Ovary (tissue), 10 donors: ENCODE measurements at regions of chr12 and their contacts with region 1.

Region 1: DNA sequence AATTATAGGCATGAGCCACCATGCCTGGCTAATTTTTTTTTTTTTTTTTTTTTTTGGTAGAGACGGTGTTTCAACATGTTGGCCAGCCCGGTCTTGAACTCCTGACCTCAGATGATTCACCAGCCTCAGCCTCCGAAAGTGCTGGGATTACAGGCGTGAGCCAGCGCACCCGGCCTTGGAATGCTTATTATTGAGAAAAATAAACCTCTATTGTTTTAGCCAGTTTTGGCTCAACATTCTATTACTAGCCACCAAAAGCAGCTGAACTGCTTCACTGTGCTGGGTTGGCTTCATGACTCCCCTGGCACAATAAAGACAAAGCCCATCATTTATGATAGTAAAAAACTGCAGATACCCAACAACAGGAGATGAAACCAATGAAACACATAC is 93.5 kb upstream of the CEP83 start:
- DNase-seq: peak; percentile 44 to 73 (median 64)
- H3K4me3 ChIP-seq: no peak overlapping the region
- H3K27ac ChIP-seq: no peak overlapping the region
- H3K4me1 ChIP-seq: peaks cover 2% of the 10 kb centered on the region
- H3K27me3 ChIP-seq: no peaks in the 10 kb centered on the region
- CTCF ChIP-seq: no peak
- EP300 ChIP-seq: no peak
- POLR2A ChIP-seq: no peak

Region 2: DNA sequence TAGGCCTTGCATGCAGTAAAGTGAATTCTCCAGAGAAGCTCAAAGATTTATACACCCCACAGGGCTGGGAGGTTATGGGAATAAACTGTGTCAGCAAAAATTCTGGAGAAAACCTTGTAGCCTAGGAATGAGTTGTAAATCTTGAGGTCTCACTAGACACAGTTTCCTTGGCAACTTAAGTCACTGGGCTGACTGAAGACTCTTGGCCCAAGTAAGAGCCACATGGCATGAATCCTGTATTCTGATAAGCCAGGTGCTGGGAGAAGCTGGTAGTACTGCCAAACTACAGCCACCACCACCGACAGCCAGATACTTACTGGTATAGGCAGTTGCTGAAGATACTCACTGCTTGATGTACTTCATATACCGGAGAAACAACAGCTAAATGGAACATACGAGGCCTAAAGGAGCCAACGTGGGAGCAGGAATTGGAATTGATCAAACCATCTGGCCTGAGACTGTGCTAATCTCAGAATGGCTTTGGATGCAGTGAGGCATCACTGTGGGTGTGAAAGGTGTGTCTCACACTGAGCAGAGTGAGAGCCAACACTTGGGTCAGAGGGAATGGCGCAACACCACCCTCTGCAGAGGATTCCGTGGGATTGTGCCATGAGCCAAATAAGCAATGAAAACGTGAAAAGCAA is 200.0 kb after region 1 on chr12:
- intact Hi-C with region 1: loop called in 2 of 4 experiments (anchors 10 kb)
- DNase-seq: peak in 3 of 5 donors; percentile 30 to 42 (median 40)
- H3K4me3 ChIP-seq: no peak overlapping the region
- H3K27ac ChIP-seq: no peak overlapping the region
- H3K4me1 ChIP-seq: peaks cover 10% of the 10 kb centered on the region
- H3K27me3 ChIP-seq: no peaks in the 10 kb centered on the region
- CTCF ChIP-seq: no peak
- EP300 ChIP-seq: no peak
- POLR2A ChIP-seq: no peak

Region 3: GRCh38 chr12:95838125-95838524 is 1285.0 kb after region 1 on chr12:
- intact Hi-C with region 1: no loop called
- DNase-seq: peak in 1 of 5 donors; percentile 27
- H3K4me3 ChIP-seq: no peak overlapping the region
- H3K27ac ChIP-seq: no peak overlapping the region
- H3K4me1 ChIP-seq: no peaks in the 10 kb centered on the region
- H3K27me3 ChIP-seq: no peaks in the 10 kb centered on the region
- CTCF ChIP-seq: no peak
- EP300 ChIP-seq: no peak
- POLR2A ChIP-seq: no peak